ENCODE measurements at regions of chr10 and their contacts with region 1.

Region 1: GRCh38 chr10:13074561-13075451 is 25.2 kb upstream of the OPTN start:
- DNase-seq: peak; percentile 76 to 81
- ATAC-seq: peak; percentile 99 to 100
- H3K4me3 ChIP-seq: no peak overlapping the region
- H3K27ac ChIP-seq: no peak overlapping the region
- H3K4me1 ChIP-seq: no peaks in the 10 kb centered on the region; the same call in 2 of the 3 replicates
- CTCF ChIP-seq: peak; percentile 91
- EP300 ChIP-seq: no peak
- POLR2A ChIP-seq: no peak
- RAD21 ChIP-seq: peak; percentile 95 to 96

Region 2: GRCh38 chr10:12782537-12782936 is 292.3 kb before region 1 on chr10:
- CTCF ChIA-PET with region 1: interaction called, 23 read pairs
- POLR2A ChIA-PET with region 1: no interaction called
- DNase-seq: peak; percentile 61 to 66
- ATAC-seq: peak; percentile 55 to 76; a peak in 4 of 6 replicates
- H3K4me3 ChIP-seq: no peak overlapping the region
- H3K27ac ChIP-seq: no peak overlapping the region
- H3K4me1 ChIP-seq: no peaks in the 10 kb centered on the region
- CTCF ChIP-seq: peak; percentile 60
- EP300 ChIP-seq: no peak
- POLR2A ChIP-seq: no peak
- RAD21 ChIP-seq: peak; percentile 39 to 47; a peak in 4 of 5 replicates

Region 3: DNA sequence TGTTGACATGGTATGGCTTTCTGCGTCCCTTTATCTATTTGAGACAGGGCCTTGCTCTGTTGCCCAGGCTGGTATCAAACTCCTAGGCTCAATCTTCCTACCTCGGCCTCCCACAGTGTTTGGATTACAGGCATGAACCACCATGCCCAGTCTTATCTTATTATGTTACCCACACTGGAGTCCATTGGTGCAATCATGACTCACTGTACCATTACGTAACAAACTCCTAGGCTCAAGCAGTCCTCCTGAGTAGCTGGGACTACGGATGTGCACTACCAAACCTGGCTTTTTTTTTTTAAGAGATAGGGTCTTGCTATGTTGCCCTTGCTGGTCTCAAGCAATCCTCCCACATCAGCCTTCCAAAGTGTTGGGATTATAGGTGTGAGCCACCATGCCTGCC is 140.0 kb before region 1 on chr10:
- CTCF ChIA-PET with region 1: no interaction called
- POLR2A ChIA-PET with region 1: no interaction called
- DNase-seq: peak in 1 of 2 experiments; percentile 50
- ATAC-seq: peak; percentile 75 to 85
- H3K4me3 ChIP-seq: no peak overlapping the region
- H3K27ac ChIP-seq: peak overlapping the region; percentile 15 to 43; a peak in 1 of 6 replicates
- H3K4me1 ChIP-seq: peaks cover 8% of the 10 kb centered on the region
- CTCF ChIP-seq: no peak
- EP300 ChIP-seq: no peak
- POLR2A ChIP-seq: no peak
- RAD21 ChIP-seq: no peak

Region 4: GRCh38 chr10:12954866-12955265 is 119.9 kb before region 1 on chr10:
- CTCF ChIA-PET with region 1: no interaction called
- POLR2A ChIA-PET with region 1: no interaction called
- DNase-seq: no peak
- ATAC-seq: no peak
- H3K4me3 ChIP-seq: no peak overlapping the region
- H3K27ac ChIP-seq: no peak overlapping the region
- H3K4me1 ChIP-seq: no peaks in the 10 kb centered on the region
- CTCF ChIP-seq: no peak
- EP300 ChIP-seq: no peak
- POLR2A ChIP-seq: no peak
- RAD21 ChIP-seq: no peak

Region 5: DNA sequence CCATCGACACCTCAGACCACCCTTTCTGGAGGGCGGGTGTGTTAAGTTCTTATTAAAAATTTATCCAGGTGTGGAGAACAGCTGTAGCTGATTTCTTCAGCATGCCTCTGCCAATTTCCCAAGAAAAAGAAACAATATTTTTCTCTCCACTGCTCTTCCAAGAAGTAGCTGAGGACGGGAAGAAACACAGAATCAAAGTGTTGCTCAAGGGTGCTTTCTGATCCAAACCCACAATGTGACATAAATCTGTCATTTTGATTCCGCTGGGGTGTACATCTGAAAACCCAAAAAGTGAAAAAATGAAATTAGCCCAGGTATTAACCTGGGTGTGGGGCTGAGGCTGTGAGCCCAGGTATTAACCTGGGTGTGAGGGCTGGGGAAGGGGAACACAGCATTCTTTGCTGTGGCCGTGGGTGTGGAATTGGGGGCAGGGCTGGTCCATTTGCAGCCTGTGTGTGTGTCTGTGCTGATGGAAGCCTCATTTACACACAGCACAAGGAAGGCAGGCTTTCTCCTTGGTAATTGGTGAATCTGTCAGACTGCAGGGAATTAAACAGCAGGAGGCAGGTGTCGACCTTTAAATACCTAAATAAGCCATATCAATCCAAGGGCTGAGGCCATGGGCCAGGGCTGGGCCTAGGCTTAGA is 24.9 kb before region 1 on chr10:
- CTCF ChIA-PET with region 1: interaction called, 12 read pairs
- POLR2A ChIA-PET with region 1: no interaction called
- DNase-seq: no peak
- ATAC-seq: no peak
- H3K4me3 ChIP-seq: no peak overlapping the region
- H3K27ac ChIP-seq: no peak overlapping the region
- H3K4me1 ChIP-seq: no peaks in the 10 kb centered on the region
- CTCF ChIP-seq: no peak
- EP300 ChIP-seq: no peak
- POLR2A ChIP-seq: no peak
- RAD21 ChIP-seq: no peak

Region 6: GRCh38 chr10:13056456-13057077 is 18.2 kb before region 1 on chr10:
- CTCF ChIA-PET with region 1: interaction called, 13 read pairs
- POLR2A ChIA-PET with region 1: no interaction called
- DNase-seq: peak; percentile 23 to 43
- ATAC-seq: peak; percentile 84 to 89; a peak in 5 of 6 replicates
- H3K4me3 ChIP-seq: no peak overlapping the region
- H3K27ac ChIP-seq: no peak overlapping the region
- H3K4me1 ChIP-seq: no peaks in the 10 kb centered on the region
- CTCF ChIP-seq: peak; percentile 61
- EP300 ChIP-seq: no peak
- POLR2A ChIP-seq: no peak
- RAD21 ChIP-seq: peak; percentile 67 to 71

Region 7: GRCh38 chr10:13062803-13063202 is 12.0 kb before region 1 on chr10:
- CTCF ChIA-PET with region 1: interaction called, 45 read pairs
- POLR2A ChIA-PET with region 1: no interaction called
- DNase-seq: no peak
- ATAC-seq: no peak
- H3K4me3 ChIP-seq: no peak overlapping the region
- H3K27ac ChIP-seq: no peak overlapping the region
- H3K4me1 ChIP-seq: no peaks in the 10 kb centered on the region
- CTCF ChIP-seq: no peak
- EP300 ChIP-seq: no peak
- POLR2A ChIP-seq: no peak
- RAD21 ChIP-seq: no peak

Region 8: DNA sequence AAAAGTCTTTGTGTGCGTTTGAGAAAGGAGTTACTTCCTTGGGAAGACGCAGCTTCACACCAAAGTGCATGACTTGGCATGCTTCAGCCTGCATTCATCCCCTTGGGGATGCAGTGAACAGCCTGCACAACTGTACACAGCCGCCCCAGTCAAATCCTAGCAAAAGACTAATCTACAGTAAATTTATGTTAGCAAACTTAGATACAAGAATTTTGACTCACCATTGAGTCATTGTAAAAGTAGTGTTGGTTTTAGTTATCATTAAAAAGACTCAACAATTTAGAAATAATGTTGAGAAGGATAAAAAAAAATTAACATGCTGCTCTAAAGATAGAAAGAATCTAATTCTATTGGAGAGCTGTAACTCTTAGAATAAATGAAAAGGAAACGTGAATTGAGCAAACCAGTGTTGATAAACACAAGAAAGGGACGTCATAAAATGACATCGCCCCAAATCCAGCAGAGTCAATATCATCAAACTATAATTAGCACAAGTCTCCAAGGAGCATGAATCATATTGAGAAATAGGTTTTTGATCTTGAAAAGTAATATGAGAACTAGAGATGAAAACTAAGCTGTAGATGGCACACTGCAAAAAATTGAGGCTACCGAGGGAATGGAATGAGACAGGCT is 13.3 kb after region 1 on chr10:
- CTCF ChIA-PET with region 1: interaction called, 28 read pairs
- POLR2A ChIA-PET with region 1: no interaction called
- DNase-seq: peak; percentile 38 to 71
- ATAC-seq: peak; percentile 83 to 89
- H3K4me3 ChIP-seq: no peak overlapping the region
- H3K27ac ChIP-seq: 0 out of 6 replicates have a peak overlapping the region, but pooled peaks of 1 of the 2 experiments have one; percentile 38
- H3K4me1 ChIP-seq: peaks cover 17% of the 10 kb centered on the region
- CTCF ChIP-seq: no peak
- EP300 ChIP-seq: no peak
- POLR2A ChIP-seq: no peak
- RAD21 ChIP-seq: no peak

Region 9: GRCh38 chr10:13173616-13174015 is 98.8 kb after region 1 on chr10:
- CTCF ChIA-PET with region 1: no interaction called
- POLR2A ChIA-PET with region 1: no interaction called
- DNase-seq: no peak
- ATAC-seq: no peak
- H3K4me3 ChIP-seq: no peak overlapping the region
- H3K27ac ChIP-seq: no peak overlapping the region
- H3K4me1 ChIP-seq: no peaks in the 10 kb centered on the region
- CTCF ChIP-seq: no peak
- EP300 ChIP-seq: no peak
- POLR2A ChIP-seq: no peak
- RAD21 ChIP-seq: no peak